ENCODE measurements at regions of chr10 and their contacts with region 1.

Region 1: DNA sequence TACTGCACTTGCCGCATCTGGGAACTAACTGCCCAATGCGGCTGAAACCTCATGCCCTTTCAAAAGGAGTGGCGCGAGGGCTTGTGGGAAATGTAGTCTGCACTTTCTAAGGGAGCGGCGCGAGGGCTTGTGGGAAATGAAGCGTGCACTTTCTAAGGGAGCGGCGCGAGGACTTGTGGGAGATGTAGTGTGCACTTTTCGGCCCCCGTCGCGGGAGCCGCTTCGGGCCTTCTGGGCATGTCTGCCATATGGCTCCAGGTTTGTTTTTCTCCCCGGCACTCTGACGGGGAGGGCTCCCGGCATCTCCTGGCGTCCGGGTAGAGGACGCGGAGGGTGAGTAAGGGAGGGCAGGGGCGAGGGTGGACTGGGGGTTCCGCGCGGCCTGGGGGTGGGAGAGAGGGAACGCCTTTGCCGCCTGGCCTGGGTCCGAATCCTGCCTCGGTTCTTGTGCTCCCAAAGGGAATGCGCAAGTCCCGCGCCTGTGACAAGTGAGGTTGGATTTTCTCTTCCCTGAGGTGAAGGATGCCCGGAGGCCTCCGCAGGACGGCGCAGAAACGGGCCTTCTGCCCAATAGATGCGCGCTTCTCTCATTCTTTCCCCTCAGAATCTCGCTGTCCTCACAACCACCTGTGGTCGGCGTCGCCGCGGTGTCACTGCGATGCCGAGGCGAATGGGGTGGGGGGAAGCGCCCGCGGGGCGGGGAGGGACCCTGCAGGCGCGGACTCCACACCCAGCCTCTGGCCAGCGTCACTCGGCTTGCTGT is at the start of gene ZNF37A:
- DNase-seq: peak; percentile 92 to 97 (median 94)
- ATAC-seq: peak; percentile 99 to 100 (median 99)
- H3K4me3 ChIP-seq: peak within 1 kb of the TSS; percentile 43 to 97 (median 86)
- H3K27ac ChIP-seq: peak within 1 kb of the TSS; percentile 53 to 91 (median 82)
- H3K4me1 ChIP-seq: peaks cover 0 to 14% (median 8%) of the 10 kb centered on the region in 12 donors
- H3K27me3 ChIP-seq: no peaks in the 10 kb centered on the region
- CTCF ChIP-seq: peak in 1 of 12 donors; percentile 8
- POLR2A ChIP-seq: peak in 1 of 2 donors; percentile 89
- total RNA-seq, gene ZNF37A: 5.6 to 10.0 (median 7.8) TPM

Region 2: GRCh38 chr10:37857287-37858211 is 236.8 kb before region 1 on chr10 and contains the start of gene ZNF248:
- intact Hi-C with region 1: loop called in 6 of 10 experiments (anchors 5 to 10 kb)
- DNase-seq: peak; percentile 96 to 98 (median 97)
- ATAC-seq: peak; percentile 98 to 99 (median 99)
- H3K4me3 ChIP-seq: peak within 1 kb of the TSS; percentile 57 to 99 (median 78)
- H3K27ac ChIP-seq: peak within 1 kb of the TSS; percentile 97 to 100 (median 99)
- H3K4me1 ChIP-seq: peaks cover 0 to 34% (median 24%) of the 10 kb centered on the region in 12 donors
- H3K27me3 ChIP-seq: no peaks in the 10 kb centered on the region
- CTCF ChIP-seq: peak in 3 of 12 donors; percentile 7 to 32 (median 14)
- POLR2A ChIP-seq: peak; percentile 54 to 97
- total RNA-seq, gene ZNF248: 6.3 to 14.7 (median 9.1) TPM

Region 3: GRCh38 chr10:38010119-38010903 is 84.0 kb before region 1 on chr10 and contains the start of gene ZNF33A:
- intact Hi-C with region 1: loop called in 5 of 10 experiments (anchors 1 to 10 kb)
- DNase-seq: peak; percentile 91 to 95 (median 92)
- ATAC-seq: peak; percentile 96 to 97 (median 96)
- H3K4me3 ChIP-seq: peak within 1 kb of the TSS; percentile 51 to 94 (median 71)
- H3K27ac ChIP-seq: peak within 1 kb of the TSS; percentile 92 to 99 (median 98)
- H3K4me1 ChIP-seq: peaks cover 0 to 19% (median 7%) of the 10 kb centered on the region in 12 donors
- H3K27me3 ChIP-seq: no peaks in the 10 kb centered on the region
- CTCF ChIP-seq: no peak
- POLR2A ChIP-seq: peak in 1 of 2 donors; percentile 67
- total RNA-seq, gene ZNF33A: 15.6 to 29.7 (median 19.0) TPM

Region 4: GRCh38 chr10:38038107-38038931 is 56.0 kb before region 1 on chr10:
- intact Hi-C with region 1: no loop called
- DNase-seq: no peak
- ATAC-seq: no peak
- H3K4me3 ChIP-seq: peak overlapping the region in 8 of 12 donors; percentile 1 to 27 (median 16)
- H3K27ac ChIP-seq: peak overlapping the region in 2 of 12 donors; percentile 19 to 73
- H3K4me1 ChIP-seq: peaks cover 0 to 18% (median 0%) of the 10 kb centered on the region in 12 donors
- H3K27me3 ChIP-seq: no peaks in the 10 kb centered on the region
- CTCF ChIP-seq: no peak
- POLR2A ChIP-seq: no peak

Measured in heart left ventricle (tissue), 16 donors.